A673 (cell line): ENCODE measurements at regions of chr6 and their contacts with region 1.

Region 1: DNA sequence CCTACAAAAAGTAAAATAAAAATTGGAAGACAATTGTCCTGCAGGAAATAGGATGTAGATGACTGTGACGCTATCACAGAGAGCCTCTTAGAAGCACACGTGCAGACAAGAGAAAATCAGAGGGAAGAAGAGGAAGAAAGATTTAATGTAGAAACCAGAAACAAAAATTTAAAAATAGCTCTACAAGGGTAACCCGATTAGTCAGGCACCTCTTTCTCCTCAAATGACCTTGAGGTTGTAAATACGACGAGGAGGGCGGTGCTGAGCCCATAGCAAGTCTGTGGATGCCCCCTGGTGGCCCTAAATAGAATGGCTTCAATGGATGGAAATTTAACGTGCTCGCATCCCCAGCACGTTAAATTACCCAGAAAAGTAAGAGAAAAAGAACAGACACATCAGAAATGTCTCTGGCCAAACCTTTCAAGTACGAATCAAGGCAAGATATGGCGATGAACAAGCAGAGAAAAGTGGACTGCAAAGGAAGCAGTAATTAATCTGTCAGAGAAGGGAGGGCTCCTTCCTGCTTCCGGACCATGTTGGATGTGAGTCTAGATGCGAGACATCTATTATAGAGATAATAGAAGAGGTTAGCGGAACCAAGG is 4.2 kb upstream of the PRPH2 start:
- DNase-seq: peak; percentile 87
- H3K4me3 ChIP-seq: peak overlapping the region; percentile 21
- H3K27ac ChIP-seq: peak overlapping the region; percentile 45
- H3K4me1 ChIP-seq: peaks cover 14% of the 10 kb centered on the region
- H3K27me3 ChIP-seq: no peaks in the 10 kb centered on the region
- CTCF ChIP-seq: peak; percentile 97

Region 2: DNA sequence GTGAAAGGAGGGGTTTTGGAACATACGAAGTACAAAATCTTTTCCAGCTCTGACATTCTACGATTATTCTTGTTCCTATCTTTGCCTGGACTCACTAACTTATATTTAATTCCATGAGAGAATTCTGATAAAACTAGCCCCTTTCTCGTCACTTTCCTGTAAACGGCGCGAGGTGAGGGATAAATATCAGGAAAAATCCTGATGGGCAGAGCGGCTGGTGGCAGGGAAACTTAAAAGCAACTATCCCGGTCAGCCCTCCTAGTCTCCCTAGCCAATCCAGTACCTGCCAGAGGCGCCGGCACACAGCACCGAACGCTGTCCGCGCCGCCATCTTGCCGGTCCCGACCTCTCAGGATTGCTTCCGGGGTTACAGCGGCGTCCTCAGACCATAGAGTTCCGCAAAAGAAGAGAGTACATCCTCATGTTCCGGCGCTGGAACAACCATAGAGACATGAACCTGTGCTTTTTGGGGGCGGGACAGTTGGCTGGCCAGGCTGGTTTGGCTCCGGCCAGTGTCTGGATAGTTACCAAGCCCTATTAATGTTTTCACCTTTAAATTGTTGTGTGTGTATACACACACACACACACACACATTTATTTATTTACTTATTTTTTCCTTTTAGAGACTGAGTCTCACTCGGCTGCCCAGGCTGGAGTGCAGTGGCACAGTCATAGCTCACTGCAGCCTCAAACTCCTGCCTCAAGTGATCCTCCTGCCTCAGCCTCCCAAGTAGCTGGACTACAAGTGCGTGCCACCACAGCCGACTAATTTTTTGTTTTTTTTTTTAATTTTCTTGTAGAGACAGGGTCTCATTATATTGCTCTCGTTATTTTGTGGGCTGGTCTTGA is 508.8 kb before region 1 on chr6 and contains the start of gene MRPS10:
- CTCF ChIA-PET with region 1: no interaction called
- POLR2A ChIA-PET with region 1: no interaction called
- intact Hi-C with region 1: loop called (anchors 10 kb)
- DNase-seq: peak; percentile 97
- H3K4me3 ChIP-seq: peak within 1 kb of the TSS; percentile 98
- H3K27ac ChIP-seq: peak within 1 kb of the TSS; percentile 90
- H3K4me1 ChIP-seq: peaks cover 13% of the 10 kb centered on the region
- H3K27me3 ChIP-seq: no peaks in the 10 kb centered on the region
- CTCF ChIP-seq: no peak
- total RNA-seq, gene MRPS10: 50.0 and 52.0 TPM in 2 replicates

Region 3: DNA sequence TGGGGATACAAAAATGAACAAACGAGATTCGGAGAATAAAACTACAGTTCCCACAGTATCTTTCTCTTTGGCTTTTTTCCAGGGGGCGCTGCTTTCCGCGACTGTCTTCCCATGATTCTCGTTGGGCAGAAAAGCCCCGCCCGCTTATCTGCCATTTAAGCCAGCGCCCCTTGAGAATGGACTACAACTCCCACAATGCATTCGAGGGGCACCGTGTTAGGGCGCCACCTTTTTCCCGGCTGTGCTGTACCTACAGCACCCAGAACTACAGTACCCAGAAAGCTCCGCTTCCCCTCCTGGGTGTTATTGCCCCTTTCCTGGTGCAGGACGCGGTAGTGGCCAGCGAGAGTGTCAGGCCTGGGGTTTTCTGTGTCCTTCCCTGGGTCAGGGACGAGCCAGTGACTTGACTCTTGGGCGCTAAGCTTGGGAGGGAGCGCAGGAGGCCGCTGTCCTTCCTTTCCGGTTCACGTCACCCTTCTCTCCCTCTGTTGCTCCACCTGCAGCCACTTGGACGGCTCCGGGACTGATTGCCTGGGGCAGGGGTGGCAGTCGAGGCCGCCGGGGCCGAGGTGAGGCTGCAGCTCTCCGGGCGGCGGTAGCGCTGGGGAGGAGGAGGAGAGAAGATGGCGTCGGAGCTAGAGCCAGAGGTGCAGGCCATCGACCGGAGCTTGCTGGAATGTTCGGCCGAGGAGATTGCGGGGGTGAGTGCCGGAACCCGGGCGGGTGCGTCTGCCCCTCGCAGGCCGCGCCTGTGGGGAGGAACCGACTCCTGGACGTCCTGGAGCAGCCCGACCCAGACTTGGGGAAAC is 162.7 kb before region 1 on chr6 and contains the start of gene UBR2:
- CTCF ChIA-PET with region 1: interaction called, 7 read pairs
- POLR2A ChIA-PET with region 1: no interaction called
- intact Hi-C with region 1: loop called (anchors 10 kb)
- DNase-seq: peak; percentile 99
- H3K4me3 ChIP-seq: peak within 1 kb of the TSS; percentile 83
- H3K27ac ChIP-seq: peak within 1 kb of the TSS; percentile 85
- H3K4me1 ChIP-seq: no peaks in the 10 kb centered on the region
- H3K27me3 ChIP-seq: no peaks in the 10 kb centered on the region
- CTCF ChIP-seq: no peak; the same call in 1 of the 2 replicates
- total RNA-seq, gene UBR2: 17.5 and 21.1 TPM in 2 replicates

Region 4: DNA sequence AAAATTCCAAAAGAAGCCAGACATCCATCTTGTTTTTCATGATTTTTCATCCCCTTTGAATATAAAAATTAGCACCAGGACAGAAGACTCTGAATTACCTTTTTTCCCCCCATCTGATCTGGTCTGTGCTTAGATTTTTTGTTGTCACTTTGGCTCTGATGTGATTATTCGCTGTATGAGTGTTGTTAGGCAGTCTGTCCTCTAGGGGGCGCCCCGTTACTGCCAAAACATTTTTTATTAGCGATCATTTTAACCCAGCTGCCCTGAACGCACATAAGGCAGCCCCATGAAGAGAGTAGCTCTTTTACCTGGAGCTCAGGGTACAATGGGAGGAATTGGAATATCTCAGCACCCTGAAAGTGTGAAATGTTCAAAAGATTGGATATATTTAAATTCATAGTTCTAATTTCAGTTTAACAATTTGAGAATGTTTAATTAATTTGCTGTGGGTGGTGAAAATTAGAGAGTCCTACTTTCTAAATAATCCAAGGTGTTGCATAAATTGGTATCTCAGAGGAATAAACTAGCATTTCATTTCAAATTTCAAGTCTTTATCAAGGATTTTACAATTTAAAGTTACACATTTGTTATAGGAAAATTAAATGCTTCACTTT is 64.9 kb before region 1 on chr6:
- CTCF ChIA-PET with region 1: interaction called, 6 read pairs
- POLR2A ChIA-PET with region 1: no interaction called
- intact Hi-C with region 1: loop called (anchors 1 kb)
- DNase-seq: peak; percentile 83
- H3K4me3 ChIP-seq: no peak overlapping the region
- H3K27ac ChIP-seq: no peak overlapping the region
- H3K4me1 ChIP-seq: no peaks in the 10 kb centered on the region
- H3K27me3 ChIP-seq: no peaks in the 10 kb centered on the region
- CTCF ChIP-seq: peak; percentile 94

Region 5: GRCh38 chr6:42774201-42774600 is 47.6 kb after region 1 on chr6:
- CTCF ChIA-PET with region 1: no interaction called
- POLR2A ChIA-PET with region 1: no interaction called
- intact Hi-C with region 1: no loop called
- DNase-seq: no peak
- H3K4me3 ChIP-seq: no peak overlapping the region
- H3K27ac ChIP-seq: no peak overlapping the region
- H3K4me1 ChIP-seq: peaks cover 1% of the 10 kb centered on the region
- H3K27me3 ChIP-seq: no peaks in the 10 kb centered on the region
- CTCF ChIP-seq: no peak